HCT116 (cell line): ENCODE measurements at regions of chr10 and their contacts with region 1.

Region 1: DNA sequence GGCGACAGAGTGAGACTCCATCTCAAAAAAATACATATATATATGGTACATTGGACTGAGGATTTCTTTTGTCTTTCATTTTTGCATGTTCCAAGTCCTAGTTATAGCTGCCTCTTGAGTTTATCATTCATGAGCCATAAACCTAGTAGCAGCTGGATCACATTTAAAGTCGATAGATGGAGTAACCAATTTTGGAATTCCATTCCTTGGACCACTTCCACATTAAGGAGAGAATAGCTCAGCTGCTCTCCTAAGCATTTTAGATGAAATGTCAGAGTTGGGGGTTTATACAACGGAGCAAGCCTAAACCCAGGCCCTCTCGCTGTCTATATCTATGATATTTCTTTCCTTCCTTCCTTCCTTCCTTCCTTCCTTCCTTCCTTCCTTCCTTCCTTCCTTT is 141.2 kb downstream of the LYZL1 start:
- DNase-seq: no peak
- ATAC-seq: no peak
- H3K4me3 ChIP-seq: no peak overlapping the region
- H3K27ac ChIP-seq: no peak overlapping the region
- H3K4me1 ChIP-seq: no peaks in the 10 kb centered on the region
- H3K27me3 ChIP-seq: no peaks in the 10 kb centered on the region
- CTCF ChIP-seq: no peak
- POLR2A ChIP-seq: no peak
- RAD21 ChIP-seq: no peak

Region 2: DNA sequence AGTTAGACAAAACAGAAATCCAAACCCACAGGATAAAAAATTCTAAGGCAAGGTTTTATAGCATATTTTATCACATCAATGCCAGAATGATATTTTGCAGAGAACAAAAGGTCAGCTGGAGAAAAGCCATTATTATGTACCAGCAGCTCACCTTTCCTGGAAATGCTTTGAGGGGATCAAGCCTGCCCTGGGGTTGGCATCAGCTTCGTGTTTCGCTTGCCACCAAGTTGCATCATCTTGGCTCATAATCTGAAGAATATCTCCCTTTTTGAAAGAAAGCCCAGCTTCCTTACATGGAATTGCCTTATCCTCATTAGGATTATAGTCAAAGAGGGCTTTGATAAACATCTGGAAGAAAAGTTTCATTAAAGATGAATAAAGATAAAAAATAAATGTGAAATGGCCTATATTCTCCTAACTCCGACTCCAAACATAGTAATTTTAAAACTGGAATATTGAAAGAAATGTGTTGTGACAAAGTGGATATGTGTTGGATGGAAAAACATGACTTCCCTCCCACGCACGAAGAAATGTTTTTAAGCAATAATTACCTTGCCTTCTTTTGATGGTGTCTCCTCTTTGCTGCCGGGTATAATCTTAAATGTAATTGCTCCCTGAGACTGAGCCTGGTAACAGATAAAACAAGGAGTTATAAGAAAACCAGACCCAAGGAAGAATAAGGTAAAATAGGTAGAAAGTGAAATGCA is 1309.9 kb before region 1 on chr10:
- CTCF ChIA-PET with region 1: no interaction called
- POLR2A ChIA-PET with region 1: no interaction called
- RAD21 ChIA-PET with region 1: no interaction called
- intact Hi-C with region 1: no loop called
- DNase-seq: peak; percentile 90
- ATAC-seq: peak; percentile 39
- H3K4me3 ChIP-seq: peak overlapping the region in 1 of 2 experiments; percentile 8; a peak in 1 of 4 replicates
- H3K27ac ChIP-seq: peak overlapping the region; percentile 96
- H3K4me1 ChIP-seq: peaks cover 75 to 94% of the 10 kb centered on the region in 2 experiments
- H3K27me3 ChIP-seq: no peaks in the 10 kb centered on the region
- CTCF ChIP-seq: no peak
- POLR2A ChIP-seq: no peak
- RAD21 ChIP-seq: peak; percentile 22; the same call in 1 of the 2 replicates

Region 3: GRCh38 chr10:28130267-28130666 is 1299.8 kb before region 1 on chr10:
- CTCF ChIA-PET with region 1: no interaction called
- POLR2A ChIA-PET with region 1: no interaction called
- RAD21 ChIA-PET with region 1: no interaction called
- intact Hi-C with region 1: no loop called
- DNase-seq: no peak
- ATAC-seq: peak; percentile 58
- H3K4me3 ChIP-seq: 0 out of 4 replicates have a peak overlapping the region, but pooled peaks of 1 of the 2 experiments have one; percentile 1
- H3K27ac ChIP-seq: peak overlapping the region; percentile 96
- H3K4me1 ChIP-seq: peaks cover 23 to 48% of the 10 kb centered on the region in 2 experiments
- H3K27me3 ChIP-seq: no peaks in the 10 kb centered on the region
- CTCF ChIP-seq: no peak
- POLR2A ChIP-seq: no peak
- RAD21 ChIP-seq: peak; percentile 17; the same call in 1 of the 2 replicates

Region 4: GRCh38 chr10:28991326-28992270 is 438.5 kb before region 1 on chr10:
- CTCF ChIA-PET with region 1: no interaction called
- POLR2A ChIA-PET with region 1: no interaction called
- RAD21 ChIA-PET with region 1: no interaction called
- intact Hi-C with region 1: no loop called
- DNase-seq: peak; percentile 76
- ATAC-seq: peak; percentile 88
- H3K4me3 ChIP-seq: no peak overlapping the region
- H3K27ac ChIP-seq: peak overlapping the region; percentile 23; the same call in 1 of the 2 replicates
- H3K4me1 ChIP-seq: peaks cover 7 to 32% of the 10 kb centered on the region in 2 experiments
- H3K27me3 ChIP-seq: no peaks in the 10 kb centered on the region
- CTCF ChIP-seq: peak; percentile 88 to 94 (median 93)
- POLR2A ChIP-seq: no peak
- RAD21 ChIP-seq: peak; percentile 97

Region 5: GRCh38 chr10:29112827-29113615 is 317.1 kb before region 1 on chr10:
- CTCF ChIA-PET with region 1: no interaction called
- POLR2A ChIA-PET with region 1: no interaction called
- RAD21 ChIA-PET with region 1: no interaction called
- intact Hi-C with region 1: no loop called
- DNase-seq: no peak
- ATAC-seq: no peak
- H3K4me3 ChIP-seq: no peak overlapping the region
- H3K27ac ChIP-seq: no peak overlapping the region
- H3K4me1 ChIP-seq: no peaks in the 10 kb centered on the region
- H3K27me3 ChIP-seq: no peaks in the 10 kb centered on the region
- CTCF ChIP-seq: no peak
- POLR2A ChIP-seq: no peak
- RAD21 ChIP-seq: no peak

Region 6: GRCh38 chr10:29443745-29444523 is 13.8 kb after region 1 on chr10:
- CTCF ChIA-PET with region 1: interaction called, 13 read pairs
- POLR2A ChIA-PET with region 1: interaction called, 4 read pairs
- RAD21 ChIA-PET with region 1: no interaction called
- intact Hi-C with region 1: no loop called
- DNase-seq: no peak
- ATAC-seq: peak; percentile 58
- H3K4me3 ChIP-seq: no peak overlapping the region
- H3K27ac ChIP-seq: no peak overlapping the region
- H3K4me1 ChIP-seq: peaks cover 4 to 16% of the 10 kb centered on the region in 2 experiments
- H3K27me3 ChIP-seq: no peaks in the 10 kb centered on the region
- CTCF ChIP-seq: no peak
- POLR2A ChIP-seq: no peak
- RAD21 ChIP-seq: no peak